Naive thymus-derived CD4-positive, alpha-beta T cell (primary cell): ENCODE measurements at regions of chr14 and their contacts with region 1.

Region 1: DNA sequence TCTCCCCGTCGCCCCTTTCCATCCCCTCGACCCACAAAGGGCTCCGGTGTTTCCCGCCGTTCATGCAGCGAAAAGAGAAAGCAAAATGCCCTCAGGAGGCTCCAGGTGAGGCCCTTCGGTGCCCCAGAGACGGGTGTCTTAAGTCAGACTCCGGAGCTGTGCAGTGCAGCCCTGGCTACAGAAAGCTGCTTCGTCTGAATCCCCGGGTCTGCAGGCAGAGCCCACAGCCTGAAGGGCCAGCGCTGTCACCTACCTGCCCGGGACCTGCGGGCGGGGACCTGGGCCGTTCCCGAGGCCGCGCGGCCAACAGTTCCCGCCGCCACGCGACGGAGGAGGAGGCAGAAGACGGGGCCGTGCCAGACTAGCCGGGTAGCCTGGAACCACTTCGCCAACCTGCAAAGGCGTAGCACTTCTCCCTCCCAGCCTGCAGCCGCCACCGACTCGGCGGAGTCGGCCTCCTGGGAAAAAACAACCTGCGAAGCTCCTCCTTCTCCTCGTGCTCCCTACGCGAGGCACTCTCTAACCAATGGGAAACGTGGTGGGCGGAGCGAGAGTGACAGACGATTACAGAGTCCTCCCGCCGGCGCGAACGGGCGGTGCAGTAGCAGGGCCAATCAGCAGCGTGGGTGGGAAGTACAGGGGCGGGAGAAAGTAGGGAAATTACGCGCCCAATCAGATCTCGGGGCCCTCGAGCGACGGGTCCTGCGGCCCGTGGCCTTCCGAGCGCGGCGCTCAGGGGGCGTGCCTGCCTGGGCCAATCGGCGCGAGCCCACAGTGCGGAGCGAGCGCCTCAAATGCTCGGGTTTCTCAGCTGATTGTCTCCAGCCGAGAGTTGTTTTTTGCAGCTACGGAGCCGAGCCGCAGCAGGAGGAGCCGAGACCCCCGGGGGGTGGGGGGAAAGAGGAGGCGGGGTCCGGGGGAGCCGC is at the starts of genes GPR137C and TXNDC16:
- DNase-seq: peak; percentile 92 to 100 (median 98)
- ATAC-seq: peak; percentile 93
- H3K4me3 ChIP-seq: peak within 1 kb of the TSS; percentile 87
- H3K4me3 Mint-ChIP-seq: peak within 1 kb of the TSS; percentile 91 to 97 (median 96)
- H3K27ac ChIP-seq: peak within 1 kb of the TSS; percentile 90
- H3K27ac Mint-ChIP-seq: peak within 1 kb of the TSS; percentile 82 to 97 (median 94)
- H3K4me1 ChIP-seq: peaks cover 9 to 15% of the 10 kb centered on the region in 2 donors
- H3K4me1 Mint-ChIP-seq: peaks cover 6 to 40% (median 28%) of the 10 kb centered on the region in 7 donors
- H3K27me3 ChIP-seq: no peaks in the 10 kb centered on the region
- H3K27me3 Mint-ChIP-seq: peaks cover 0 to 26% (median 0%) of the 10 kb centered on the region in 5 donors
- total RNA-seq, gene GPR137C: 0.27 to 0.70 (median 0.34) TPM in 3 of 5 experiments, not detected in the others
- total RNA-seq, gene TXNDC16: 6.9 to 15.8 (median 9.1) TPM

Region 2: GRCh38 chr14:51651388-51652167 is 900.7 kb before region 1 on chr14 and contains the start of gene FRMD6:
- CTCF ChIA-PET with region 1: no interaction called
- POLR2A ChIA-PET with region 1: no interaction called
- intact Hi-C with region 1: loop called (anchors 2 kb)
- DNase-seq: peak; percentile 75 to 90 (median 83)
- ATAC-seq: peak; percentile 90
- H3K4me3 ChIP-seq: peak within 1 kb of the TSS; percentile 76
- H3K4me3 Mint-ChIP-seq: peak within 1 kb of the TSS; percentile 77 to 89 (median 84)
- H3K27ac ChIP-seq: peak within 1 kb of the TSS; percentile 78
- H3K27ac Mint-ChIP-seq: peak within 1 kb of the TSS in 8 of 9 donors; percentile 20 to 83 (median 73)
- H3K4me1 ChIP-seq: peaks cover 6 to 18% of the 10 kb centered on the region in 2 donors
- H3K4me1 Mint-ChIP-seq: peaks cover 12 to 29% (median 18%) of the 10 kb centered on the region in 7 donors
- H3K27me3 ChIP-seq: peaks cover 0 to 12% of the 10 kb centered on the region in 2 donors
- H3K27me3 Mint-ChIP-seq: peaks cover 9 to 31% (median 19%) of the 10 kb centered on the region in 5 donors
- total RNA-seq, gene FRMD6: 0.93 to 4.8 (median 3.9) TPM

Region 3: DNA sequence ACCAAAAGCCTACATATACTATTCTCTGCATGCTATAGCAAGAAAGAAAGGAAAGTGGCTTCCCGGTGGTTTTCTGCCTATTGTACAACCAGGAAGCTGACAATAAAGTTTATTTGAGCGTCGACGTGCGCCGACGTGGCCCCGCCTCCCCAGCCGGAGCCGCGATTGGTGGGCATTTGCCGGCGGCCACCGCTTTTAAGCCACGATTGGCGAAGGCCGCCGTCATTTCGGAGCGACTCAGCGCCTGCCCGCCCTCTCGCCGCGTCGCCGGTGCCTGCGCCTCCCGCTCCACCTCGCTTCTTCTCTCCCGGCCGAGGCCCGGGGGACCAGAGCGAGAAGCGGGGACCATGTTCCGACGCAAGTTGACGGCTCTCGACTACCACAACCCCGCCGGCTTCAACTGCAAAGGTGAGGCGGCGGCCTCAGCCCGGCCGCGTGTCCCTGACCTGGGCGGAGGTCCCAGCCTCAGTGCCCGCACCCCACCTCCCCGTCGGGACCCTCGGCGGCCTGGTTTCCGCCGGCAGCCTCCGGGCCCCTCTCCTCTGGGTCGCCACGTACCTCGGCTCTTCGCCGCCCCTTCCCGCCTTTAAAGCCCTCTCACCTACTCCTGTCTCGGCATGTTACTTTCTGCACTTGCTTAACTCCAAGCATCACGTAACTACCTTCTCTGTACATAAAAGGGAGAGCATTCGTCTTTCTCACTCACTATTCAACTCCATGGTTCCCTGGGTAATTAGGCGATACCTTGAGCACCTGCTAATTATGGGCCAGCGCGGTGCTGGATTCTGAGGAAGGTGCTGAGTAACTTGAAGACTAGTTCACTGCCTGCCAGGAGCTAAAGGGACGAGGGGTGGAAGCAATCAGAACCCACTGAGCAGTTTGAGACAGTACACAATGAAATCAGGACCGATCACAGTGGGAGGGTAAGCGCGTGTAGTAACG is 562.8 kb before region 1 on chr14 and contains the start of gene RTRAF:
- CTCF ChIA-PET with region 1: no interaction called
- POLR2A ChIA-PET with region 1: no interaction called
- intact Hi-C with region 1: loop called (anchors 1 kb)
- DNase-seq: peak; percentile 86 to 93 (median 91)
- ATAC-seq: peak; percentile 98
- H3K4me3 ChIP-seq: peak within 1 kb of the TSS; percentile 60
- H3K4me3 Mint-ChIP-seq: peak within 1 kb of the TSS; percentile 93 to 97 (median 95)
- H3K27ac ChIP-seq: peak within 1 kb of the TSS; percentile 88
- H3K27ac Mint-ChIP-seq: peak within 1 kb of the TSS; percentile 91 to 99 (median 95)
- H3K4me1 ChIP-seq: peaks cover 19 to 22% of the 10 kb centered on the region in 2 donors
- H3K4me1 Mint-ChIP-seq: peaks cover 20 to 57% (median 50%) of the 10 kb centered on the region in 7 donors
- H3K27me3 ChIP-seq: no peaks in the 10 kb centered on the region
- H3K27me3 Mint-ChIP-seq: peaks cover 0 to 4% (median 0%) of the 10 kb centered on the region in 5 donors
- total RNA-seq, gene RTRAF: 112 to 180 (median 116) TPM

Region 4: DNA sequence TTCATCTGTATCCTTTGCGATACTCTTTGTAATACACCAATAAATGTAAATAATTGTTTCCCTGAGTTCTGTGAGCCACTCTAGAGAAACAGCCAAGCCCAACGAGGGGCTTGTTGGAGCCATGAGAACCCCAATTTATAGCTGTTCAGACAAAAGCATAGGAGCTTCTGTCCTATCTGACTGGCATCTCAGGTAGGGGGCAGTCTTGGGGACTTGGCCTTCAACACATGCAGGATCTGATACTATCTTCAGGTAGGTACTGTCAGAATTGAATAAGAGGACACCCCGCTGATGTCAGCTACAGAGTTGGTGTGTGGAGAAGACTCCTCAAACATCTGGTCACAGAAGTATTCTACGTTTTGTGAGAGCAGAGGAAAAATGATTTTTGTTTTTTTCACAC is 25.3 kb before region 1 on chr14:
- CTCF ChIA-PET with region 1: no interaction called
- POLR2A ChIA-PET with region 1: interaction called, 5 read pairs
- intact Hi-C with region 1: loop called (anchors 1 to 2 kb)
- DNase-seq: no peak
- ATAC-seq: no peak
- H3K4me3 ChIP-seq: no peak overlapping the region
- H3K4me3 Mint-ChIP-seq: no peak overlapping the region
- H3K27ac ChIP-seq: no peak overlapping the region
- H3K27ac Mint-ChIP-seq: no peak overlapping the region
- H3K4me1 ChIP-seq: no peaks in the 10 kb centered on the region
- H3K4me1 Mint-ChIP-seq: peaks cover 0 to 2% (median 0%) of the 10 kb centered on the region in 7 donors
- H3K27me3 ChIP-seq: no peaks in the 10 kb centered on the region
- H3K27me3 Mint-ChIP-seq: no peaks in the 10 kb centered on the region

Region 5: DNA sequence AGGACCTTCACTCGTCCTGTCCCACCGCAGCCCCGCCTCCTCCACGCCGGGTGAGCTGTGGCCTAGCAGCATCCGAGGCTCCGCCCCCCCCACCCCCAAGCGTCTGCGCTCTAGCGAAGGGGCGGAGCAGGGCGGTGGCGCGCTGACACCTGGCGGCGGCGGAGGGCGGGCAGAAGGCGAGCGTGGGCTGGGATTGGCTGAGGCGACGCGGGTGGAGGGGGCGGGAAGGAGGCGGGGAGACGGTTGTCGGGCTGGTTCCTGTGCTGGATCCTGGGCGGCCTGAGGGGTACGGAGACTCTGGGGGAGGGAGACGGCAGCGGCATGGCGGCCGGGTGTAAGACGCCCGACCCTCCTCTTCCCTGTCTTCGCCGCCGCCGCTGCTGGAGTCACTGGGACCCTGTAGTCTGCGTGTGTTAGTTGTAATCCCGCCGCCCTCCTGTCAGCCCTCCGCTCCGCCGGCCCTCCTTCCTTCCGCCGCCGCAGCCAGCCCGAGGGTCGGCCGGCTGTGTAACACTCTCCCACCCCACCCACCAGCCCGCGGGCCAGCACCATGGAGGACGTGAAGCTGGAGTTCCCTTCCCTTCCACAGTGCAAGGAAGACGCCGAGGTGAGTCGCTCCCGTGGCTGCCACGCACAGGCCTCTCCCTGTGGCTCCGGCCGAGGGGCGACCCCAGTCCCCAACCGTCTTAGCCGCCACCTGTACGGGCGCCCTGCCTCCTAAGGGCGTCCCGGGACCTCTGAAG is 177.8 kb after region 1 on chr14 and contains the start of gene STYX:
- CTCF ChIA-PET with region 1: no interaction called
- POLR2A ChIA-PET with region 1: interaction called, 8 read pairs
- intact Hi-C with region 1: loop called (anchors 1 kb)
- DNase-seq: peak; percentile 91 to 97 (median 94)
- ATAC-seq: peak; percentile 99
- H3K4me3 ChIP-seq: peak within 1 kb of the TSS; percentile 88
- H3K4me3 Mint-ChIP-seq: peak within 1 kb of the TSS; percentile 87 to 95 (median 94)
- H3K27ac ChIP-seq: peak within 1 kb of the TSS; percentile 94
- H3K27ac Mint-ChIP-seq: peak within 1 kb of the TSS; percentile 84 to 97 (median 89)
- H3K4me1 ChIP-seq: peaks cover 14 to 16% of the 10 kb centered on the region in 2 donors
- H3K4me1 Mint-ChIP-seq: peaks cover 18 to 40% (median 33%) of the 10 kb centered on the region in 7 donors
- H3K27me3 ChIP-seq: no peaks in the 10 kb centered on the region
- H3K27me3 Mint-ChIP-seq: no peaks in the 10 kb centered on the region
- total RNA-seq, gene STYX: 23.9 to 45.3 (median 29.2) TPM

Region 6: GRCh38 chr14:52918486-52918885 is 366.2 kb after region 1 on chr14:
- CTCF ChIA-PET with region 1: no interaction called
- POLR2A ChIA-PET with region 1: no interaction called
- intact Hi-C with region 1: loop called in 1 of 2 experiments (anchors 1 kb)
- DNase-seq: peak in 7 of 9 donors; percentile 55 to 81 (median 75)
- ATAC-seq: peak; percentile 99
- H3K4me3 ChIP-seq: no peak overlapping the region
- H3K4me3 Mint-ChIP-seq: peak overlapping the region in 3 of 10 donors; percentile 1 to 26 (median 22)
- H3K27ac ChIP-seq: peak overlapping the region; percentile 55
- H3K27ac Mint-ChIP-seq: peak overlapping the region; percentile 65 to 93 (median 81)
- H3K4me1 ChIP-seq: peaks cover 18 to 20% of the 10 kb centered on the region in 2 donors
- H3K4me1 Mint-ChIP-seq: peaks cover 15 to 37% (median 30%) of the 10 kb centered on the region in 7 donors
- H3K27me3 ChIP-seq: no peaks in the 10 kb centered on the region
- H3K27me3 Mint-ChIP-seq: peaks cover 0 to 2% (median 0%) of the 10 kb centered on the region in 5 donors

Region 7: DNA sequence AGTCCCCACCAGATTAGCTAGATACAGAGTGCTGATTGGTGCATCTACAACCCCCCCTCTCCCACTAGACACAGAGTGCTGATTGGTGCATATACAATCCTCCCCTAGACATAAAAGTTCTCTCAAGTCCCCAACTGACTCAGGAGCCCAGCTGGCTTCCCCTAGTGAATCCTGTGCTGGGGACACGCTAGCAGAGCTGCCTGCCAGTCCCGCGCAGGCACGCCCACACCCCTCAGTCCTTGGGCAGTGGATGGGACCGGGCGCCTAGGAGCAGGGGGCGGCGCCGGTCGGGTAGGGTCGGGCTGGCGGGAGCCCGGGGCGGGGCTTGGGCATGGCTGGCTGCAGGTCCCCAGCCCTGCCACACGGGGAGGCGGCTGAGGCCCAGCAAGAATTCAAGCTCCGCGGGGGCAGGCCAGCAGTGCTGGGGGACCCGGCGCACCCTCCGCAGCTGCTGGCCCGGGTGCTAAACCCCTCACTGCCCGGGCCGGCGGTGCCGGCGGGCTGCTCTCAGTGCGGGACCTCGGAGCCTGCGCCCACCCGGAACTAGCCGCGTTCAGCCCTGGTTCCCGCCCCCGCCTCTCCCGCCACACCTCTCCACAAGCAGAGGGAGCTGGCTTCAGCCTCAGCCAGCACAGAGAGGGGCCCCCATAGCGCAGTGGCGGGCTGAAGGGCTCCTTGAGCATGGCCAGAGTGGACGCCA is 665.1 kb after region 1 on chr14:
- CTCF ChIA-PET with region 1: no interaction called
- POLR2A ChIA-PET with region 1: no interaction called
- intact Hi-C with region 1: loop called in 1 of 2 experiments (anchors 2 kb)
- DNase-seq: peak; percentile 51 to 85 (median 67)
- ATAC-seq: peak; percentile 96
- H3K4me3 ChIP-seq: peak overlapping the region; percentile 72
- H3K4me3 Mint-ChIP-seq: peak overlapping the region; percentile 70 to 94 (median 90)
- H3K27ac ChIP-seq: peak overlapping the region; percentile 56
- H3K27ac Mint-ChIP-seq: peak overlapping the region in 8 of 9 donors; percentile 46 to 90 (median 76)
- H3K4me1 ChIP-seq: peaks cover 5 to 6% of the 10 kb centered on the region in 2 donors
- H3K4me1 Mint-ChIP-seq: peaks cover 5 to 20% (median 12%) of the 10 kb centered on the region in 7 donors
- H3K27me3 ChIP-seq: no peaks in the 10 kb centered on the region
- H3K27me3 Mint-ChIP-seq: peaks cover 0 to 2% (median 0%) of the 10 kb centered on the region in 5 donors